ENCODE measurements at regions of chr15 and their contacts with region 1.

Region 1: GRCh38 chr15:57541805-57542504 is 49.7 kb upstream of the MYZAP start:
- DNase-seq: peak; percentile 74
- H3K4me3 ChIP-seq: no peak overlapping the region
- H3K27ac ChIP-seq: peak overlapping the region in 1 of 2 donors; percentile 12
- H3K4me1 ChIP-seq: peaks cover 11% of the 10 kb centered on the region
- H3K27me3 ChIP-seq: no peaks in the 10 kb centered on the region
- CTCF ChIP-seq: peak; percentile 38 to 82 (median 72)
- POLR2A ChIP-seq: no peak

Region 2: DNA sequence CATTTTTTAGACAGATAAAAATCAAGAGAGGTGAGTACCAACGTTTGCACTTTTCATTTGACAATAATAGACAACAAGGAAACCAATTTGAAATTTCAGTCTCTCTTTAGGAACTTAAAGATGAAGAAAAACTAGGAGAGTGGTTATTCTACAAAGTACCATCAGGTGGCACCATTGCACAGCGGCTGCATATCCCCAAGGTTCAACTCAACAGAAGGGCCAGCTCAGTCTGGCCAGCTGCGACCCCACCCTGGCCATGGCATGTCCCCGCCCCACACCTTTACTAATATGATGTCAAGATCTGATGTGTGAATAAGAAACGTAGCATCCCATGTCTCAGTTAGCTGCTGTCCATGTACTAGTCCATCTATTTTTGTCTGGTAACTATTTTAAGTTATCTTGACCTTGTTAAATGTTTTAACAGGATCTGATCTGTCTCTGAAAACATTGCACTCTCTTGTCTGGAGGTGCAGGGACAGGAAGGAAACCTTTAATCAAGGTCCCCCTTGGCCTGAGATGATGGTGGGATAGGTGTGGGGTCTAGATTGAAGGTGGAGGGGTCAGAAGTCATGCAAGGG is 201.2 kb before region 1 on chr15:
- intact Hi-C with region 1: loop called (anchors 5 kb)
- DNase-seq: peak; percentile 57
- H3K4me3 ChIP-seq: no peak overlapping the region
- H3K27ac ChIP-seq: no peak overlapping the region
- H3K4me1 ChIP-seq: no peaks in the 10 kb centered on the region
- H3K27me3 ChIP-seq: no peaks in the 10 kb centered on the region
- CTCF ChIP-seq: peak; percentile 57 to 91 (median 84)
- POLR2A ChIP-seq: no peak

Region 3: DNA sequence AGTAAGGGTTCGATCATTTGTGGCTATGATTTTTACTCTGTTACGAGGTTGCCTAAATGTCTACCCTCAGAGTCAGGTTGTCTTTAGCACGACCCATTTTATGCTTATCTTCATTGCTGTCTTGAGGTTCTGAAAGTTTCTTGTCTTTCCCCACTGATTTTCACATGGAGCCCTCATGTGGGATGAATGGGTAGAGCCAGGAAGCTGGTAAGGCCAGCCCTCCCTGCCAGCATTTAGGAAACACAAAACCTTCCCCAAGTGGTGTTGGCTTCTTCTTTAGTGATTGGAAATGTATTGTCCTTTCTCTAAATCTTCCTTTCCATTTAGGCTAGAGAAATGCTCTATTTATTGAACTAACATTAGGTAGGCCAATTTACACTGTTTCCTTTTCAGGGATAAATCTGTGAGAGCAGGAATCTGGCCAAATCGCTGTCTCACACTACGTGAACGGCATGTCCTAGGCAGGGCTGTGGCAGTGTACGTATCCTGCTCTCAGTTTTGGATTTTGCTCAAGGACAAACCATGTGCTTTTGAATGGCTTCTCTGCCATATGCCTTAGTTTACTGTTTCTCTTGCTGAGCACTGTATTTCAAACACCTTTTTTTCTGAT is 93.5 kb after region 1 on chr15:
- intact Hi-C with region 1: no loop called
- DNase-seq: peak; percentile 79
- H3K4me3 ChIP-seq: no peak overlapping the region
- H3K27ac ChIP-seq: peak overlapping the region; percentile 62 to 70
- H3K4me1 ChIP-seq: peaks cover 10% of the 10 kb centered on the region
- H3K27me3 ChIP-seq: no peaks in the 10 kb centered on the region
- CTCF ChIP-seq: peak in 1 of 4 experiments; percentile 25
- POLR2A ChIP-seq: no peak

Measured in prostate gland (tissue), 2 donors.